Right ventricle myocardium inferior (tissue), 1 donor: ENCODE measurements at regions of chr15 and their contacts with region 1.

Region 1: GRCh38 chr15:97909291-97909891 is 51.1 kb upstream of the ARRDC4 start:
- DNase-seq: no peak
- ATAC-seq: peak; percentile 86

Region 2: DNA sequence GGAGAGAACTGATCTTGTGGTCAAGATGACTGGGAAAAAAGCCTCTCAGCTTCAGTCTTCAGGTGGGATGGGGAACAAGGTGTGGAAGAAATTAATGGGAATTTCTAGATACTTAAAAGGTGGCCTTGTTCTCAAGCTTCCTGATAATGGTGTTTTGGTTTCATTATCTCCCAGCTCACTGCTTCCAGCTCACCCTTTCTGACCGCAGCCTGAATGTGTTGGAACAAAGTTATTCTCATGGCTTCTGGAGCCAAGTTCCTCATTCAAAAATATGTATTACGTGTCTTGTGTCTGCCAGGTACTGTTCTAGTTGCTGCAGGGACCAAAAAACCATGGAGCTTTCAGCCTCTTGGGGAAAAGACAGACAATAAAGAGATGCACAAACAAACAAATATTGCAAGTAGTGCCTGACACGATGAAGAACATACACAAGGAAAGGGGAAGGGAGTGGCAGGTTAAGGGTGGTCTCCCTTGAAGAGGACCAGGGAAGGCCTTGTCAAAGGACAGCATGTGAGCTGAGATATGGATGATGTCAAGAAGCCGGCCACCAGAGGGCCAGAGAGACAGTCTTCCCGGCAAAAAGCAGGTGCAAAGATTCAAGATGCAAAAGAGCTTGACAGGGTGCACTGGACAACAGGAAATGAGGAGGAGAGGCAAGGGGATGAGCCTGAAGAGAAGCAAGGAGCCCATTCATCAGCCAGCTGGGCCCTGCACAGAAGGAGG is 86.7 kb after region 1 on chr15:
- intact Hi-C with region 1: loop called (anchors 10 kb)
- DNase-seq: no peak
- ATAC-seq: no peak

Region 3: GRCh38 chr15:98085003-98085639 is 175.7 kb after region 1 on chr15:
- intact Hi-C with region 1: loop called (anchors 1 kb)
- DNase-seq: no peak
- ATAC-seq: no peak

Region 4: GRCh38 chr15:98177924-98178592 is 268.7 kb after region 1 on chr15:
- intact Hi-C with region 1: loop called (anchors 5 kb)
- DNase-seq: no peak
- ATAC-seq: peak; percentile 50

Region 5: GRCh38 chr15:98292442-98293240 is 383.2 kb after region 1 on chr15:
- intact Hi-C with region 1: loop called (anchors 10 kb)
- DNase-seq: no peak
- ATAC-seq: no peak